ENCODE measurements at regions of chr2 and their contacts with region 1.

Region 1: DNA sequence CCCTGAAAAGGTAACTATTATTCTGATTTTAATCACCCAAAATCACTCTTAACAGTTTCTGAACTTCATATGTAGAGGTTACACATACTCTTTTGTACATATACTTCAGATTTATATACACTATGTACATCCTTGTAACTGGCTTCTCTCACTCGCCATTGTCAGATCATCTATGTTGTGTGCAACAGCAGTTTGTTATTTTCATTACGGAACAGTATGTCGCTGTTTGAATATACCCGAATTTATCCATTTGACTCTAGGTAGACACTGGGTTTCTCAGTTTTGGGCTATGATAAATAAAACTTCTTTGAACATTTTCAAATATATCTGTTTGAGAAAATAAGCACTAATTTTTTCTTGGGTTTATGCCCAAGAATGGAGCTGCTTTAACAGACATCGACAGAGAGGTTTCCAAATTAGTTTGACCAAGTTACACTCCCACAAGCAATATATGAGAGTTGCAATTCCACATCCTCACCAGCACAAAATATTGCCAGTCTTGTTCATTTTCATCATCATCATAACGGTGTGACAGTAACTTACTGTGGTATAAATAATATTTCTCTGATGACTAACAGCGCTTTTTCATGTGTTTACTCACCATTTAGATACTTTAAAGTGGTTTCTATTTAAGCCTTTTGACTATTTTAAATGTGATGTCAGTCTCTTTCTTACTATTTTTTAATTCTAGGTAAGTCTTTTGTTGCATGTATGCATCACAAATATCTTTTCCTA is 80.9 kb downstream of the SMC6 start:
- DNase-seq: no peak
- ATAC-seq: no peak

Region 2: GRCh38 chr2:16773080-16773713 is 899.6 kb before region 1 on chr2:
- intact Hi-C with region 1: loop called (anchors 10 kb)
- DNase-seq: no peak
- ATAC-seq: peak; percentile 79

Region 3: DNA sequence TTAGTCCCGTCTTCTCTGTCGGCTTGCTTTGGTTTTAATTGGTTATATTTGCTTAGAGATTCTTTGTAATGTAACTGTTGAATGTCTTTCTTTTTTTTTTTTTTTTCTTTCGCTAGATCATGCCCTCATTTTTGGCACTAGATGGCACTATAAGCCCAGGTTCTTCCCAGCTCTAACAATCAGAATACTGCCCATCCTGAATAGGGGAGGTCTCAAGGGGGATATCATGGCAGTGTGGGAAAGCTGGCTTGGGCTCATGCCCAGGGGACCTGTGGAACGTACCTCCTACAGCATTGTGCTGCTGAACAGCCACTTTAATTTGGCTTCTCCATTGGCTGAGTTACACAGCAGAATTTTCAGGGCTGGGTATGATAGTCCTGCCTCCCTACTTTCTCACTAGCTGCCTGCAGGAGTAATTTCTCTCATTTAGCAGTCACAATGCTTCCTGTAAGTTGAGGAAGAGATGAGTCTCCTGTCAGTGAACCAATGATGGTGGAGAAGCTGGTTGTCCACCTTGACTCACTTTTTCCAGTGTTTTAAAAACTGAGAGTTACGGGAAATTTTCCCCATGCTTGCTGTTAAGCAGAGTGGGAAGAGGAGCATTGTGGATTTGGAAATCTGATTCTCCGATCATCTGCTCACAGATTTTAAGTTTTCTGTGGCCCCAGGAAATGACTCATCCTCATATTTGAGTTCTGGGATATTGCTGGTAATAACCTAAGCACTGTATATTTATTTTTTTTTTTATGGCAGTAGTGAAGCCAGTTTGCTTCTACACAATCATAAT is 201.7 kb before region 1 on chr2:
- intact Hi-C with region 1: loop called (anchors 10 kb)
- DNase-seq: no peak
- ATAC-seq: no peak

Measured in Right ventricle myocardium superior (tissue), 1 donor.